Naive thymus-derived CD4-positive, alpha-beta T cell (primary cell): ENCODE measurements at regions of chr5 and their contacts with region 1.

Region 1: DNA sequence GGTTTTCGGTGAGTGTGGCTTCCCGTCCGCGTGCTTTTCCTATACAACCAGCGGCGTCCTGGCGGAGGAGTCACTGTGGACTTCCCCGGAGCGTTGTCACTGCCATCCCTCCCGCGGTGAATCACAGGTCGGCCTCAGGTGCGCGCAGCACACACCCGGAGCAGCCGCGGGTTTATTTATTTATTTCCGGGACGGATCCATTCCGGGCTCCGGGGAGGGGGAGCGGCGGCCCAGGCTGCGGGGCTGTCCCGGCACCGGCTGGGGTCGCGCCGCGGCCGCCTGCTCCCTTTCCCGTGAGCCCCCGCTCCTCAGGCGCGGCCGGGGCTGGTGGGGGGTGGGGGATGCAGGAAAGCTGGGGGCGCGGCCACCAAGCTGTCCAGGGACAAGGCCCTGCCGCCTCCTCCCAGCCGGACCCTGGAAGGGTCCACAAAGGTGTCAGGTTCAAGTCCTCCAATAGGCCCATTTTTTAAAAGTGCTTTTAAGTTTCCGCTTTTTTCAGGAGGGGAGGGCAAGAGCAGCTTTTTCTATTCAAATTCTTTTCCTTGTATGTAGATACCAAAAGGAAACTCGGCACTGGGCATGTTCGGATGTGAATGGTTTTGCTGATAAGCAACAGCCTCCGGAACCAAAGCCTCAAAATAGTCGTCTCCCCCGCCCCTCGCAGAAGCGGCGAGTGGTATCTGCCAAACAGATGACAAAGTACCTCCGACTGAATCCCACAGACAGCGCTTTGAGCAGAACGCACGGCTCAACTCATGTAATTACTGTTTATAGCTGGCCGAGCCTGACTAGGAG is 192.5 kb downstream of the CD180 start:
- DNase-seq: peak; percentile 71 to 91 (median 87)
- ATAC-seq: peak; percentile 91
- H3K4me3 ChIP-seq: peak overlapping the region; percentile 97
- H3K4me3 Mint-ChIP-seq: peak overlapping the region; percentile 92 to 99 (median 97)
- H3K27ac ChIP-seq: peak overlapping the region; percentile 75
- H3K27ac Mint-ChIP-seq: peak overlapping the region; percentile 93 to 98 (median 95)
- H3K4me1 ChIP-seq: peaks cover 7 to 28% of the 10 kb centered on the region in 2 donors
- H3K4me1 Mint-ChIP-seq: peaks cover 25 to 62% (median 55%) of the 10 kb centered on the region in 7 donors
- H3K27me3 ChIP-seq: no peaks in the 10 kb centered on the region
- H3K27me3 Mint-ChIP-seq: no peaks in the 10 kb centered on the region

Region 2: DNA sequence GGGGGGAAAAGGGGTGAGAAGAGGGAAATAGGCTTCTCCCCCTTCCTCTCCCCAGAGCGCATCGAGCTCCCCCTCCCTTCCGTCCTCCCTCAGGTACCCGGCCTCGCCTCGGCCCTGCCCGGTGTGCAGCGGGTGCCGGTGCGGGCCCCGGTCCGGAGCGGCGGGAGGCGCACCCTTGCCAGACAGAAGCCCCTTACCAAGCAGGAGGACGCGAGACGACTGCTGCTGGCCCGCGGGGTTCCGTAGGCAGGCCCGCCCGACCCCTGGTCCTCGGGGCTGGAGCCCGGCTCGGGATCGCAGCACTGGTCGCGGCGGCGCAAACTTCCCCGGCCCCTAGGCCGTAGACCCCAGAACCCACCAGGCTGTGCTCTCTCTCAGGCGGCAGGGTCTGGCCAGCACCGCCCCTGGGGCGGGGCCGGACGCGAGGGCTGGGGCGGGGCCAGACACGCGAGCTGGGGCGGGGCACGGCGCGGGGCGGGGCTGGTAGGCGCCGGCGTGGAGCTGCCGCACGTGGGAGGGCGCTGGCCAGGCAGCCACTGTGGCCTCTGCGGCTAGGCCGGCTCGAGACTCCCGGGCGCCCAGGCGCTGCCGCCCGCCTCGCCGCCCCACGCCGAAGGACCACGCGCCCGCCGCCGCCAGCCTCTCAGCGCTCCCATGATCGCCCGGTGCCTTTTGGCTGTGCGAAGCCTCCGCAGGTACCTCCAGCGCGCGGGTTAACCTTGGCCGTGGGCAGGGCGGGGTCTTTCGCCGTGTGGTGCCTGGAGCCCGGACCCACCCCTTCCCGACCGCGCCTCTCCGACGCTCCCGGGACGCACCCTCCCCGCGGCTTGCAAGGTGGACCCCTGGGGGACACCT is 1282.2 kb before region 1 on chr5 and contains the starts of genes NLN and SGTB:
- CTCF ChIA-PET with region 1: no interaction called
- POLR2A ChIA-PET with region 1: no interaction called
- intact Hi-C with region 1: loop called in 1 of 2 experiments (anchors 10 kb)
- DNase-seq: peak; percentile 65 to 93 (median 83)
- ATAC-seq: peak; percentile 97
- H3K4me3 ChIP-seq: peak within 1 kb of the TSS; percentile 75
- H3K4me3 Mint-ChIP-seq: peak within 1 kb of the TSS in 6 of 10 donors; percentile 85 to 97 (median 92)
- H3K27ac ChIP-seq: peak within 1 kb of the TSS; percentile 97
- H3K27ac Mint-ChIP-seq: peak within 1 kb of the TSS; percentile 74 to 91 (median 86)
- H3K4me1 ChIP-seq: peaks cover 22 to 33% of the 10 kb centered on the region in 2 donors
- H3K4me1 Mint-ChIP-seq: peaks cover 9 to 36% (median 15%) of the 10 kb centered on the region in 7 donors
- H3K27me3 ChIP-seq: no peaks in the 10 kb centered on the region
- H3K27me3 Mint-ChIP-seq: no peaks in the 10 kb centered on the region
- total RNA-seq, gene NLN: 3.5 to 11.9 (median 4.1) TPM
- total RNA-seq, gene SGTB: 12.8 to 59.5 (median 50.8) TPM

Region 3: GRCh38 chr5:66840511-66841013 is 163.6 kb before region 1 on chr5:
- CTCF ChIA-PET with region 1: no interaction called
- POLR2A ChIA-PET with region 1: no interaction called
- intact Hi-C with region 1: loop called in 1 of 2 experiments (anchors 5 kb)
- DNase-seq: peak in 1 of 9 donors; percentile 39
- ATAC-seq: peak; percentile 73
- H3K4me3 ChIP-seq: no peak overlapping the region
- H3K4me3 Mint-ChIP-seq: peak overlapping the region in 1 of 10 donors; percentile 71
- H3K27ac ChIP-seq: no peak overlapping the region
- H3K27ac Mint-ChIP-seq: peak overlapping the region in 1 of 9 donors; percentile 93
- H3K4me1 ChIP-seq: no peaks in the 10 kb centered on the region
- H3K4me1 Mint-ChIP-seq: peaks cover 0 to 71% (median 0%) of the 10 kb centered on the region in 7 donors
- H3K27me3 ChIP-seq: no peaks in the 10 kb centered on the region
- H3K27me3 Mint-ChIP-seq: peaks cover 0 to 13% (median 7%) of the 10 kb centered on the region in 5 donors

Region 4: GRCh38 chr5:67050136-67050535 is 46.0 kb after region 1 on chr5:
- CTCF ChIA-PET with region 1: no interaction called
- POLR2A ChIA-PET with region 1: no interaction called
- intact Hi-C with region 1: loop called in 1 of 2 experiments (anchors 5 kb)
- DNase-seq: no peak
- ATAC-seq: no peak
- H3K4me3 ChIP-seq: no peak overlapping the region
- H3K4me3 Mint-ChIP-seq: peak overlapping the region in 1 of 10 donors; percentile 11
- H3K27ac ChIP-seq: no peak overlapping the region
- H3K27ac Mint-ChIP-seq: peak overlapping the region in 2 of 9 donors; percentile 8 to 10
- H3K4me1 ChIP-seq: peaks cover 0 to 3% of the 10 kb centered on the region in 2 donors
- H3K4me1 Mint-ChIP-seq: peaks cover 9 to 27% (median 18%) of the 10 kb centered on the region in 7 donors
- H3K27me3 ChIP-seq: no peaks in the 10 kb centered on the region
- H3K27me3 Mint-ChIP-seq: no peaks in the 10 kb centered on the region

Region 5: DNA sequence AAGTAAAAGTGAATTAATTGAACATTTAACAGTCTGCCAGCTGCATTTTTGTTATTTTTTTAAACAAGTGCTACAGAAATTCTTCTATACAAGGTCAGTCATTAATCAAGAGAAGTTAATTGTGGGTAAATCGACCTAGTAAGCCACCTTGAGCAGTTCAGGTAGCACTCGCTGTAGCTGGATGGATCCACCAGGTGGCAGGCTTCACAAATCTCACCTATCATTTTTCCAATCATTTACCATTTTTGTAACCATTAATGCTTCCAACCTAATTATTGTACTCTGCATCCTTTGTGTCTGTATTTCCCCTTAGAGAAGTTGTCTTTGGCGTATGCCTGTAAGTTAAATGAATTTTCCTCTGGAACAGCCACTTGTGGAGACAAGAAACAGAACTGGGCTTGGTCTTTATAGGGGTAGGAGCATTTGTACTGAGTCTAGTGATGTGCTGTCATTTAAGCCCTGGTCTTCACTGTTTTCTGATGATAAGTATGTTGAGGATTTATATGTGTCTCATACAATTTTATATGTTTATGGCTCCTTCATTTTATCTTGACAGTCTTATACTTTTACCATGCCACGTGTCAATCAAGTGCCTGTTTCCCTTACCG is 152.9 kb after region 1 on chr5:
- CTCF ChIA-PET with region 1: no interaction called
- POLR2A ChIA-PET with region 1: interaction called, 5 read pairs
- intact Hi-C with region 1: loop called (anchors 1 to 2 kb)
- DNase-seq: peak in 7 of 9 donors; percentile 28 to 64 (median 52)
- ATAC-seq: peak; percentile 75
- H3K4me3 ChIP-seq: no peak overlapping the region
- H3K4me3 Mint-ChIP-seq: peak overlapping the region in 4 of 10 donors; percentile 2 to 53 (median 48)
- H3K27ac ChIP-seq: no peak overlapping the region
- H3K27ac Mint-ChIP-seq: peak overlapping the region in 8 of 9 donors; percentile 49 to 100 (median 74)
- H3K4me1 ChIP-seq: peaks cover 41 to 42% of the 10 kb centered on the region in 2 donors
- H3K4me1 Mint-ChIP-seq: peaks cover 25 to 61% (median 55%) of the 10 kb centered on the region in 7 donors
- H3K27me3 ChIP-seq: no peaks in the 10 kb centered on the region
- H3K27me3 Mint-ChIP-seq: no peaks in the 10 kb centered on the region

Region 6: GRCh38 chr5:67414712-67415111 is 410.6 kb after region 1 on chr5:
- CTCF ChIA-PET with region 1: no interaction called
- POLR2A ChIA-PET with region 1: no interaction called
- intact Hi-C with region 1: no loop called
- DNase-seq: no peak
- ATAC-seq: no peak
- H3K4me3 ChIP-seq: no peak overlapping the region
- H3K4me3 Mint-ChIP-seq: no peak overlapping the region
- H3K27ac ChIP-seq: no peak overlapping the region
- H3K27ac Mint-ChIP-seq: no peak overlapping the region
- H3K4me1 ChIP-seq: peaks cover 0 to 10% of the 10 kb centered on the region in 2 donors
- H3K4me1 Mint-ChIP-seq: peaks cover 6 to 19% (median 13%) of the 10 kb centered on the region in 7 donors
- H3K27me3 ChIP-seq: no peaks in the 10 kb centered on the region
- H3K27me3 Mint-ChIP-seq: no peaks in the 10 kb centered on the region

Region 7: DNA sequence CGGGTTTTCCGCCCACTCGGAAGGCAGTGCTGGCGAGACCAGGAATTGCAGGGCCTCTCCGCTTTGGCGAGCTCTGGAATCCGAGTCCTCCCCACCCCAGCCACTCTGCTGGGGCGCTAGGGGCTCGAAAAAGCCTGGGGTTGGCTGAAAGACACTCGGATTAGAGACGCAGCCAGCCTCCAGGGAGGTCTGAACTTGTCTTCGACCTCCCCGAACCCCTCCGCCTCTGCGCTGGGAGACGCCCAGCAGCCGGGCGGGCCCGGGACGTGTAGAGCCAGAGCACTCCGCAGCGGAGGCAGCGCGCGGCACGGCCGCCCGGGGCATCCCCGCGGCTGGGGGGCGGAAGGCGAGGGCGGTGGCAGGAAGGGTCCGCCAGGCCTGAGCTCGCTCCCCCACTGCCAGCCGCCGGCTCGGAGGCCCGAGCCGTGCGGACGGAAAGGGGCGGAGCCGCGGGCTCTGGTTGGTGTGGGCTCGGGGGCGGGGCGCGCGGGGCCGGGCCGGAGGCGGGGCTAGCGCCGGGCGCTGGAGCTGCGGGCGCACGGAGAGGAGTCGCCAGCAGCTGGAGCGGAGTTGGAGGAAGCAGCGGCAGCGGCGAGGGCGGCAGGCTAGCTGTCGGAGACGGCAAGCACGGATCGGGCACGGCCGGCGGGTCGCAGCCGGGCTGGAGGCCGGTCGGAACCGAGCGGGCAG is 1211.2 kb after region 1 on chr5 and contains the start of gene PIK3R1:
- CTCF ChIA-PET with region 1: no interaction called
- POLR2A ChIA-PET with region 1: no interaction called
- intact Hi-C with region 1: loop called (anchors 1 to 5 kb)
- DNase-seq: peak; percentile 86 to 96 (median 93)
- ATAC-seq: peak; percentile 91
- H3K4me3 ChIP-seq: peak within 1 kb of the TSS; percentile 73
- H3K4me3 Mint-ChIP-seq: peak within 1 kb of the TSS; percentile 84 to 94 (median 92)
- H3K27ac ChIP-seq: peak within 1 kb of the TSS; percentile 89
- H3K27ac Mint-ChIP-seq: peak within 1 kb of the TSS; percentile 85 to 97 (median 94)
- H3K4me1 ChIP-seq: peaks cover 16 to 18% of the 10 kb centered on the region in 2 donors
- H3K4me1 Mint-ChIP-seq: peaks cover 35 to 46% (median 44%) of the 10 kb centered on the region in 7 donors
- H3K27me3 ChIP-seq: no peaks in the 10 kb centered on the region
- H3K27me3 Mint-ChIP-seq: no peaks in the 10 kb centered on the region
- total RNA-seq, gene PIK3R1: 72.0 to 207 (median 131) TPM

Region 8: GRCh38 chr5:68287976-68288706 is 1284.0 kb after region 1 on chr5:
- CTCF ChIA-PET with region 1: no interaction called
- POLR2A ChIA-PET with region 1: no interaction called
- intact Hi-C with region 1: loop called (anchors 5 to 10 kb)
- DNase-seq: peak; percentile 19 to 55 (median 49)
- ATAC-seq: peak; percentile 76
- H3K4me3 ChIP-seq: peak overlapping the region; percentile 65
- H3K4me3 Mint-ChIP-seq: peak overlapping the region; percentile 81 to 93 (median 90)
- H3K27ac ChIP-seq: peak overlapping the region; percentile 55
- H3K27ac Mint-ChIP-seq: peak overlapping the region; percentile 75 to 97 (median 92)
- H3K4me1 ChIP-seq: peaks cover 64 to 79% of the 10 kb centered on the region in 2 donors
- H3K4me1 Mint-ChIP-seq: peaks cover 49 to 96% (median 90%) of the 10 kb centered on the region in 7 donors
- H3K27me3 ChIP-seq: no peaks in the 10 kb centered on the region
- H3K27me3 Mint-ChIP-seq: no peaks in the 10 kb centered on the region